AG04450 (cell line): ENCODE measurements at regions of chr17 and their contacts with region 1.

Region 1: GRCh38 chr17:17496189-17497064 is at the start of gene RASD1:
- DNase-seq: peak; percentile 56
- H3K4me3 ChIP-seq: peak within 1 kb of the TSS; percentile 66
- H3K27ac ChIP-seq: peak within 1 kb of the TSS; percentile 11
- H3K27me3 ChIP-seq: peaks cover 2% of the 10 kb centered on the region
- CTCF ChIP-seq: peak; percentile 56
- polyA plus RNA-seq, gene RASD1: 0.55 and 0.91 TPM in 2 replicates

Region 2: GRCh38 chr17:17356149-17356930 is 140.1 kb before region 1 on chr17:
- CTCF ChIA-PET with region 1: interaction called, 16 read pairs
- POLR2A ChIA-PET with region 1: interaction called, 5 read pairs
- DNase-seq: peak; percentile 74
- H3K4me3 ChIP-seq: no peak overlapping the region
- H3K27ac ChIP-seq: no peak overlapping the region
- H3K27me3 ChIP-seq: peaks cover 4% of the 10 kb centered on the region
- CTCF ChIP-seq: peak; percentile 100

Region 3: GRCh38 chr17:17511881-17512858 is 15.7 kb after region 1 on chr17:
- CTCF ChIA-PET with region 1: interaction called, 8 read pairs
- POLR2A ChIA-PET with region 1: interaction called, 39 read pairs
- DNase-seq: peak; percentile 75
- H3K4me3 ChIP-seq: no peak overlapping the region
- H3K27ac ChIP-seq: no peak overlapping the region
- H3K27me3 ChIP-seq: no peaks in the 10 kb centered on the region
- CTCF ChIP-seq: no peak

Region 4: DNA sequence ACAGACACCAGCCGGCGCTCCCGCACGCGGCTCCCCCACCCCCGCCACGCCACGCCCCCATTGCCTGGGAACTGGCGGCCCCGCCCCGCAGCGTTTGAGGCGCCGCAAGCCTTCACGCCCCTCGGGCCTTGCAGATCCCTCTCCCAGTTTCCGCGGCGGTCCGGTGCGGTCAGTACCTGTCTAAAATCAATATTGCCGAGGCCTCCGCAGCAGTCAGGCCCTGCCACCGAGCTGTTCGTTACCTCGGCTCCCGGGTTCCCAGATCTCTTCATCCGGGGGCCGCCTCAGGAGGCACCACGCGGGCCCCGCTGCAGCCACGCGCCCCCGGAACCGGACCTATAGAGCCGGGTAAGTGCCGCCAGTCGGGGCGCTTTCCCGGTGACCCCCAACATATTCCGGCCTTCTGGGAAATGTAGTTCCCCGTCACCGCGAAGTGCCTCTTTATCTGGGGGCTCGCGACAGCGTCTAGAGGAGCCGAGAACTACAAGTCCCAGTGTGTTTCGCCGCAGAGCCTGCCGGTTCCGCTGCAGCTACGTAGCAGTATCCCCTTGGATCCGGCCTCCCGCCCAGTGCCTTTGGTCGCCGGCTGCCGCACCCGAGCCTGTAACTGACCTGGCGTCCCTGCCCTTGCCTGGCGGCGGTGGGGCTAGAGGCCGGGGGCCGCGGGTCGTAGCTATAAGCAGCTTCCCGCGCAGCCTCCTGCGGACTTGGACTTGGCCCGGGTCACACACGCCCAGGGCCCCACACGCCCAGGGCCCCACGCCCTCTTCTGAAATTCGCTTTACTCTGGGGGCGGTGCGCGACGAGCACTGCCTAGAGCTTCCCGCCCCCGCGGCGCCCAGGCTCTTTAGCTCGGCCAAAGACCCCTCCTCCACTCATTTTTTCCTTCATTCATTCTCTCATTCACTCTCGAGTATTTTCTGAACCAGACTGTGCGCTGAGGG is 95.2 kb after region 1 on chr17 and contains the start of gene PEMT:
- CTCF ChIA-PET with region 1: interaction called, 11 read pairs
- POLR2A ChIA-PET with region 1: interaction called, 12 read pairs
- DNase-seq: peak; percentile 98
- H3K4me3 ChIP-seq: peak within 1 kb of the TSS; percentile 81
- H3K27ac ChIP-seq: peak within 1 kb of the TSS; percentile 75
- H3K27me3 ChIP-seq: no peaks in the 10 kb centered on the region
- CTCF ChIP-seq: peak; percentile 14; the same call in 1 of the 2 replicates
- polyA plus RNA-seq, gene PEMT: 14.9 and 23.2 TPM in 2 replicates

Region 5: DNA sequence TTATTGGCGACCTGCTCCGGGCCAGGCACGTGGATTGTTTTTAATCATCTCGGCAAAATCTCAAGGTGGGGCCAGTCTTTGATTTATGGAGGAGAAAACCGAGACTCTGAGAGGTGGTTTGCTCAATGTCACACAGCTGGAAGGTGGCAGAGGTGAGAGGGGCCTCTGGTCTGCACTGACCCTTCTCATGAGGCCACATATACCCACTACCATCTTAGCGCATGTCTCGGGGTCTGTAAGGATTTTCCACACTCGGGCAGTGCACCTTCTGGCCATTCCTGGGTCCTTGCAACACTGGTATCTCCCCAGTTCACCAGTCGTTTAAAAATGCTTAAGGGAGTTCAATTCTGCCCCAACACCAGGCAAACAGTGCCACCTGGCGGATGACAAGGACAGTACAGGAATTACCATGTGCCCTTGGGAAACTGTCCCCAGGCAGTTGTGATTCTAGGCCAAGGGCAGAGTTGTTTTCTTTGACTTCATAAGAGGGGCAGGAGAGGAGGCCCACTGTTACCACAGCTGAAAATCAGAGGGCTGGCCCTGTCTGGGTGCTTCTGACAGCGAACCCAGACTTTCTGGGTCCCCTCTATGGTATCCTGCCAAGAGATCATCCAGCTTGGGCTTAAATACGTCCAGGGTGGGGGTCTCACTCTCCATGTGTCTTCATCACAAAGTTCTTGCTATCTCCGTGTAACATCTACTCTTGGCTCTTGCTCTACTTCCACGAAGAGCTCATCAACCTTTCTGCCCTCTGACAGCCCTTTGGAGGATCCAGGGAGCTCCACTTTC is 145.4 kb after region 1 on chr17:
- CTCF ChIA-PET with region 1: interaction called, 49 read pairs
- POLR2A ChIA-PET with region 1: interaction called, 12 read pairs
- DNase-seq: peak; percentile 56
- H3K4me3 ChIP-seq: no peak overlapping the region
- H3K27ac ChIP-seq: no peak overlapping the region
- H3K27me3 ChIP-seq: peaks cover 5% of the 10 kb centered on the region
- CTCF ChIP-seq: peak; percentile 87